ENCODE measurements at regions of chr12 and their contacts with region 1.

Region 1: GRCh38 chr12:121839106-121839992 is 19.3 kb downstream of the HPD start:
- DNase-seq: peak; percentile 99
- H3K4me3 Mint-ChIP-seq: peak overlapping the region; percentile 97
- H3K27ac Mint-ChIP-seq: peak overlapping the region; percentile 84
- H3K4me1 Mint-ChIP-seq: peaks cover 22% of the 10 kb centered on the region
- H3K27me3 Mint-ChIP-seq: no peaks in the 10 kb centered on the region

Region 2: DNA sequence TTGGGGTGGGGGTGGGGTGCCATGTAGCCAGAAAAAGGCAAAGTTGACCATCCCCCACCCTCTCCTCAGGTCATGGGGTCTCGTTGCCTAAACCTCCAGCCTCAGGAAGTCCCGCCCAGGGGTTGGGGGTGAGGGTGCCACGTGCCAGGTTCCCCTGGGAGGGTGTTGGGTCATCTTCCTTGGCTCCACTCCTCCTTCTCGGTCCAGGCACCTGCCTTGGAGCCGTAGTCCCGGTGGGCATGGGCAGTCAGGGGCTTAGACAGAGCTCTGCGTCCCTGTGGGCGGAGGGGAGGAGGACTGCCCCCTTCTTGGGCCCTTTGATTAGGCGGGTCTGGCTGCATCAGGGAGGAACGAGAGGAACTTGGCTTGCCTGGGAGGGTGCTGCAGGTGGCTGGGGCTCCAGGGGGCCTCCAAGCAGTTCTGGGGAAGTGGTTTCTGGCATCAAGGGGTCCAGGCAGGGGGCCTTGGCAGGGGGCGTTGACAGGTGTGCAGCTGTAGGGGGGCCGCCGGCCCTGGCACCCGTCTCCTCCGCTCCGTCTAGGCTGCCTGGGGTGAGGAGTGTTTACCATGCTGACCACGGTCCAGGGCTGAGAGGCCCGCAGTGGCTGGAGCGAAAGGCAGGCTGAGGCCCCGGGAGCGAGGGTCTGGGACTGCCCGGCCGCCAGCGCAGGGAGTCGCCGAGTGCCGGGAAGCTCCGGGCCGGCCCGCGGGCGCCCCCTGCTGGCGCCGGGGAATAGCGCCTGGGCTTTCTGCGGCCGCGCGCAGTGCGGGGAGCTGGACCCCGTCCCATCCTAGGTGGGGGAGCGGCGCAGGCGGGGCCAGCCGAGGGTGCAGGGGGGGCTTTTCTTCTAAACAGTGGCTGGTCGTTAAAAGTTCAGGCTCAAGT is 27.7 kb before region 1 on chr12:
- CTCF ChIA-PET with region 1: interaction called, 12 read pairs
- POLR2A ChIA-PET with region 1: no interaction called
- DNase-seq: peak; percentile 73
- H3K4me3 Mint-ChIP-seq: peak overlapping the region; percentile 81
- H3K27ac Mint-ChIP-seq: peak overlapping the region; percentile 61
- H3K4me1 Mint-ChIP-seq: peaks cover 57% of the 10 kb centered on the region
- H3K27me3 Mint-ChIP-seq: no peaks in the 10 kb centered on the region

Region 3: GRCh38 chr12:121849665-121850064 is 10.3 kb after region 1 on chr12:
- CTCF ChIA-PET with region 1: no interaction called
- POLR2A ChIA-PET with region 1: no interaction called
- DNase-seq: no peak
- H3K4me3 Mint-ChIP-seq: no peak overlapping the region
- H3K27ac Mint-ChIP-seq: no peak overlapping the region
- H3K4me1 Mint-ChIP-seq: no peaks in the 10 kb centered on the region
- H3K27me3 Mint-ChIP-seq: no peaks in the 10 kb centered on the region

Region 4: GRCh38 chr12:121903202-121903601 is 63.9 kb after region 1 on chr12:
- CTCF ChIA-PET with region 1: no interaction called
- POLR2A ChIA-PET with region 1: no interaction called
- DNase-seq: no peak
- H3K4me3 Mint-ChIP-seq: no peak overlapping the region
- H3K27ac Mint-ChIP-seq: no peak overlapping the region
- H3K4me1 Mint-ChIP-seq: no peaks in the 10 kb centered on the region
- H3K27me3 Mint-ChIP-seq: no peaks in the 10 kb centered on the region

Measured in activated CD4-positive, alpha-beta memory T cell treated with anti-CD3 and anti-CD28 coated beads, Interleukin-2, amount 10 ng/mL, durations not matched to agents 7 days and 5 days (primary cell).